ENCODE measurements at regions of chr9 and their contacts with region 1.

Region 1: DNA sequence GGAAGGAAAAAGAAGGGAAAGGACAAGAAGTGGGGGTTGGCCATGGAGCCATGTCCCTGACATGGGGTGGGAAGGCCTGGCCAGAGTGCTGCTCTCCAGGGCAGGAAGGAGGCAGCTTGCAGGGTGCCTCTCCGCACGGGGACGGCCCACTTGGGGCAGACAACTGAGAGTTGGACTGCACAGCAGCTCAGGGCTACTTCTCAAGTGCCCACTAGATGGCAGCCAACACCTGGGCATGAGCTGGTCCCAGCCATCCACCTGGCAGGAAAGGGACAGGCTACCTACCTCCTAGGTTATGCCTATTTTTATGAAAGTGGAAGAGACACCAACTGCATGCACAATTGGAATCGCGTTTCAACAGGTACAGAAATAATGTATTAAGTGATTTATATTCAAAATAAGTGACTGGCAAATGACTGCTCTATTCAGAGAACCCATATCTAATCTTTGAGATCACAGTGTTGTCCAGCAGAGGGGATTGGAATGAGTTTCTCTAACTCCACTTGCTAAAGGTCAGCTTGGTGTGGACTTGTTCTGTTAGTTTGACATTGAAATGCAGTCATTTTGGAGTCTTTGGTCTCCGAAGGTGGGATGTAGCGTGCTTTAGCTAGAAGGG is 113.4 kb downstream of the SYK start:
- DNase-seq: peak; percentile 66 to 82 (median 74)
- ATAC-seq: peak; percentile 97
- H3K4me3 ChIP-seq: no peak overlapping the region
- H3K4me1 ChIP-seq: no peaks in the 10 kb centered on the region
- CTCF ChIP-seq: peak; percentile 79

Region 2: DNA sequence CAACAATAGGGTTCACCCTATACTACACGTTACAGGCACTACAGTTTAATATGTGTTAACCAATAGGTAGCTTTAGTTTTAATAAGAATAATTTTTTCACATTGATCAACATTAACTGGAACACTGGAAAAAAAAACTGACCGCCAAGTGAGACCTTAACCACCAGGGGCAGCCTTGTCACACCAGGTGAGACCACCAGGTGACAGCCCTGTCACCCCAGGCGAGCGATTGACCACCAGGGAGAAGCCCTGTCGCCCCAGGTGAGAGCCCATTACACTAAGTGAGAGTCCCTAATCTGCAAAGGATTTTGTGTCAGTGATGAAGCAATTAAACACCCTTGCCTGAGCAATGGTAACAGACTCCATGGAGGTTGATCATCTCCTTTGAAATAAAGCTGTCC is 188.8 kb before region 1 on chr9:
- intact Hi-C with region 1: no loop called
- DNase-seq: no peak
- ATAC-seq: no peak
- H3K4me3 ChIP-seq: no peak overlapping the region
- H3K4me1 ChIP-seq: no peaks in the 10 kb centered on the region
- CTCF ChIP-seq: no peak

Region 3: DNA sequence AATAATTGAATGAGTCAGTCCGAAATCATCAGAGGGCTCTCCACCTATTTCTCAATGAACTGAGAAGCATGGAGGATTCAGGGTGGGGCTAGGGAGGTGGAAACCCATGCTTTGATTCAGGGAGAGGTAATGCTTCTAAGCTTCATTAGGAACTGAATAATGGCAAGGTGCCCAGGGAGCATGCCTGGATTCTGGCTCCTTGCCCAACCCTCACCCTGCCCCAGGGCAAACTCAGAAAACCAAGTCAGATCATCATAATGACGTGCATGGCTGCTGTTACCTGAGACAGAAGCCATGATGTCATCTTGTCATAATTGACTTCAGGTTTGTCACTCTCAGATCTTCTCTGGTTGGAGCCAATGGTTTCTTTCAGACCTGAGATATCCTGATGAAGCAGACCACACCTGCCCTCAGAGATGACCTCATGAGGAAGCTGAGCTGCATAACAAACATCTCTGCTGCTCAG is 86.2 kb after region 1 on chr9:
- intact Hi-C with region 1: no loop called
- DNase-seq: peak in 1 of 3 donors; percentile 15
- ATAC-seq: peak; percentile 26
- H3K4me3 ChIP-seq: no peak overlapping the region
- H3K4me1 ChIP-seq: peaks cover 5% of the 10 kb centered on the region
- CTCF ChIP-seq: no peak

Region 4: GRCh38 chr9:91422758-91423711 is 508.1 kb after region 1 on chr9:
- intact Hi-C with region 1: loop called in 1 of 2 experiments (anchors 10 kb)
- DNase-seq: peak; percentile 75 to 78 (median 75)
- ATAC-seq: peak; percentile 28
- H3K4me3 ChIP-seq: peak overlapping the region; percentile 48
- H3K4me1 ChIP-seq: peaks cover 27% of the 10 kb centered on the region
- CTCF ChIP-seq: no peak

Region 5: DNA sequence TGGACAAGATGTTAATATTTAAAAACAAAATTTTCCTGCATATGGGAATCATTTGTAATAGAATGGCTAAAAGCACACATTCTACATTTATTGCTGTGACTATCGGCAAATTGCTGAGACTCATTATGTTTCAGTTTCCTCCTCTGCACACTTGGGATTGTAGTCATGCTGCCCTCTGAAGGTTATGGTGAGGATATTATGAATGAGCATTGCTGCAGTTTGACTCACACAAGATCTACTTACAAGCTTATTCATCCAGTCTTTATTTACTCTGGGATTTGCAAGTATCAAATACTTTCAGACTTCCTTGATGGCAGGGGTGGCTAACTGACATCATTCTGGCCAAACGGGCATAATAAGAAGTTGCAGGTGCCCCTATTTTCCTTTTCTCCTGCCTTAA is 518.2 kb after region 1 on chr9:
- intact Hi-C with region 1: loop called (anchors 10 kb)
- DNase-seq: peak in 1 of 3 donors; percentile 37
- ATAC-seq: peak; percentile 95
- H3K4me3 ChIP-seq: no peak overlapping the region
- H3K4me1 ChIP-seq: no peaks in the 10 kb centered on the region
- CTCF ChIP-seq: peak; percentile 6

Region 6: DNA sequence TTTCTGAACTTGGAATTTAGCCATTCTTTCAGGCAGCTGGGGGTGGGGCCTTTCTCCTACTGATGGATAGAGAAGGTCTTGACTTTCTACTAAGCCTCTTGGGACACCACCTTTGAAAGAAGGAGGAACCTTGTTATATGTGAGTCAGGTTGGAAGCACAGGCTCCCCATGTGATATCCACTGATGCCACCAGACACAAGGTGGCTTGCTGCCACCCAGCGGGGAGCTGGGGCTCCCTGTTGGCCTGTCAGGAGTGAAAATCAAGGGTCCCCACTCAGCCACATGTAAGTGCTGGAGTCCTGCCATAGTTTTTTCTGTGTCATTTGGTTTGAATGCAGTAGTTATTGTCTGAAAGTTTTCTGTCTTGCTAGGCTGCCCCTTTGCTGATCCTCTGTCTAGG is 761.1 kb after region 1 on chr9:
- intact Hi-C with region 1: loop called in 1 of 2 experiments (anchors 5 kb)
- DNase-seq: peak in 1 of 3 donors; percentile 10
- ATAC-seq: no peak
- H3K4me3 ChIP-seq: no peak overlapping the region
- H3K4me1 ChIP-seq: no peaks in the 10 kb centered on the region
- CTCF ChIP-seq: no peak

Measured in mucosa of descending colon (tissue), 3 donors.